IMR-90 (cell line): ENCODE measurements at regions of chr5 and their contacts with region 1.

Region 1: GRCh38 chr5:143824851-143825720 is 13.1 kb downstream of the HMHB1 start:
- DNase-seq: peak; percentile 75
- ATAC-seq: peak; percentile 88
- H3K4me3 ChIP-seq: no peak overlapping the region
- H3K27ac ChIP-seq: no peak overlapping the region
- H3K4me1 ChIP-seq: peaks cover 8% of the 10 kb centered on the region
- H3K27me3 ChIP-seq: no peaks in the 10 kb centered on the region
- CTCF ChIP-seq: peak; percentile 87
- POLR2A ChIP-seq: 0 out of 2 replicates have a peak, but pooled peaks have one; percentile 38
- RAD21 ChIP-seq: peak; percentile 99

Region 2: DNA sequence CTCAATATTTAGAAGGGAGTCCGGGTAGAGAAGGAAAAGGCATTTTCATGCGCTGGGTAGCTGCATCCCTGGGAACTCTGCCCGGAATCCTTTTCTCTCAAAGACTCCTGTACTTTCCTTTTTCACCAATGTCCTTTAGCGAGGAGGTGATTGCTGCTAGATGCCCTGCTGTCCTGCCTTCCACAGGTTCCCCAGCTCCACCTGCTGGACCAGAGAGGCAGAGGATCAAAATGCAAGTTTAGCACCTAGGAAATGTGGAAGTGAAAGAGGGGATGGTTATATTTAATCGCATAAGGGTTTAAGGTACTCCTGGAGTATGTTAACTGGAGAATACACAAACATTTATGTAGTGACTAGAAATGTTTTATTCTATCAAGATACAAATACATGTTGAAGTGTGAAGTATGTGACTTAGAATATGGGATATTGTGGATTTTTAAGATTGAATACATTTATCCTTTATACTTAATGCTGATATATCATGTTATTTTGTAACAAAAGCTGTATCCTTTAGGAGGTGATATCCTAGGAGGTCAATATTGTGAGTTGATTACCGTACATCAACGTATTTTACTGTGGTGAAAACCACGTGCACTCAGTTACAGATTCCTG is 909.2 kb before region 1 on chr5:
- CTCF ChIA-PET with region 1: no interaction called
- POLR2A ChIA-PET with region 1: no interaction called
- dilution Hi-C with region 1: no loop called
- in situ Hi-C with region 1: loop called (anchors 10 kb)
- intact Hi-C with region 1: loop called (anchors 5 kb)
- DNase-seq: peak; percentile 48
- ATAC-seq: no peak; the same call in 1 of the 2 replicates
- H3K4me3 ChIP-seq: no peak overlapping the region
- H3K27ac ChIP-seq: no peak overlapping the region
- H3K4me1 ChIP-seq: no peaks in the 10 kb centered on the region
- H3K27me3 ChIP-seq: no peaks in the 10 kb centered on the region
- CTCF ChIP-seq: peak; percentile 53
- POLR2A ChIP-seq: no peak
- RAD21 ChIP-seq: peak; percentile 57

Region 3: GRCh38 chr5:143106174-143106573 is 718.9 kb before region 1 on chr5:
- CTCF ChIA-PET with region 1: interaction called, 3 read pairs
- POLR2A ChIA-PET with region 1: no interaction called
- dilution Hi-C with region 1: no loop called
- in situ Hi-C with region 1: no loop called
- intact Hi-C with region 1: loop called (anchors 10 kb)
- DNase-seq: peak; percentile 77
- ATAC-seq: peak; percentile 78
- H3K4me3 ChIP-seq: no peak overlapping the region
- H3K27ac ChIP-seq: no peak overlapping the region
- H3K4me1 ChIP-seq: peaks cover 2% of the 10 kb centered on the region; the same call in 1 of the 2 replicates
- H3K27me3 ChIP-seq: no peaks in the 10 kb centered on the region
- CTCF ChIP-seq: peak; percentile 46
- POLR2A ChIP-seq: no peak
- RAD21 ChIP-seq: peak; percentile 68

Region 4: DNA sequence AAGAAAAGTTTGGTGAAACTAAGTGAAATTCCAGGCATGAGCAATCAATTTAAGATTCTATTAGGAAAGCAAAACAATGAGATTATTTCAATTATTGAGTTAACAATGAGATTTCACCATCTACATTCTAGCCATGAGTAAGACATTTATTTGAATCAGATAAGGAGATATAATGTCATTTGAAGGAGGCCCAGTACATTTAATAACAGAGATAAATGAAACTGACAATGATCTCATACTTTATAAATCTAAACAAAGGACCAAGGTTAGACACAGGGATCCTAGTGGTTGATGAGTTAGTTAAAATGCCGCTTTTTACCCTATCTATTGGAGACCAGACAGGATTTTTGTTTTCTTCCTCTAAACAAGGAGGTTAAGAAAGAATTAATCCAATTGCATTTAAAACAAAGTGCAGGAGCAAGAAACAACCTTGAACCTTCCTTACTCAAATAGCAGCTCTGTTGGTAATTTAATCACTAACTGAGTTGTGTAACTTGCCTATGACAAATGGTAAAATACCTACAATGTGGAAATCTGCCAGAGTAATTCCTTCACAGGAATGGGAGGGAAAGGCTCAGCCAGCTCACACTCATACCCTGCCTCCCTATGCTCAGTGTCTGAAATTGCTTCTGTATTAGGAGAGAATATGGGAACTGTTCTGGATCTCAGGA is 318.1 kb before region 1 on chr5:
- CTCF ChIA-PET with region 1: no interaction called
- POLR2A ChIA-PET with region 1: no interaction called
- dilution Hi-C with region 1: no loop called
- in situ Hi-C with region 1: no loop called
- intact Hi-C with region 1: loop called (anchors 5 kb)
- DNase-seq: peak; percentile 95
- ATAC-seq: peak; percentile 90
- H3K4me3 ChIP-seq: no peak overlapping the region
- H3K27ac ChIP-seq: peak overlapping the region; percentile 61
- H3K4me1 ChIP-seq: peaks cover 11% of the 10 kb centered on the region
- H3K27me3 ChIP-seq: no peaks in the 10 kb centered on the region
- CTCF ChIP-seq: peak; percentile 27; the same call in 1 of the 2 replicates
- POLR2A ChIP-seq: no peak
- RAD21 ChIP-seq: peak; percentile 43

Region 5: GRCh38 chr5:143557061-143557818 is 267.8 kb before region 1 on chr5:
- CTCF ChIA-PET with region 1: no interaction called
- POLR2A ChIA-PET with region 1: no interaction called
- dilution Hi-C with region 1: no loop called
- in situ Hi-C with region 1: loop called (anchors 10 kb)
- intact Hi-C with region 1: loop called (anchors 1 kb)
- DNase-seq: peak; percentile 94
- ATAC-seq: peak; percentile 68
- H3K4me3 ChIP-seq: no peak overlapping the region
- H3K27ac ChIP-seq: peak overlapping the region; percentile 26
- H3K4me1 ChIP-seq: peaks cover 10% of the 10 kb centered on the region
- H3K27me3 ChIP-seq: no peaks in the 10 kb centered on the region
- CTCF ChIP-seq: no peak
- POLR2A ChIP-seq: no peak
- RAD21 ChIP-seq: no peak

Region 6: GRCh38 chr5:143714629-143715028 is 110.5 kb before region 1 on chr5:
- CTCF ChIA-PET with region 1: no interaction called
- POLR2A ChIA-PET with region 1: no interaction called
- dilution Hi-C with region 1: no loop called
- in situ Hi-C with region 1: no loop called
- intact Hi-C with region 1: loop called (anchors 5 kb)
- DNase-seq: peak; percentile 60
- ATAC-seq: peak; percentile 21; the same call in 1 of the 2 replicates
- H3K4me3 ChIP-seq: no peak overlapping the region
- H3K27ac ChIP-seq: no peak overlapping the region
- H3K4me1 ChIP-seq: peaks cover 3% of the 10 kb centered on the region
- H3K27me3 ChIP-seq: no peaks in the 10 kb centered on the region
- CTCF ChIP-seq: no peak
- POLR2A ChIP-seq: no peak
- RAD21 ChIP-seq: no peak

Region 7: GRCh38 chr5:144142139-144142823 is 317.2 kb after region 1 on chr5:
- CTCF ChIA-PET with region 1: interaction called, 3 read pairs
- POLR2A ChIA-PET with region 1: no interaction called
- dilution Hi-C with region 1: no loop called
- in situ Hi-C with region 1: loop called (anchors 10 kb)
- intact Hi-C with region 1: loop called (anchors 1 kb)
- DNase-seq: peak; percentile 67
- ATAC-seq: peak; percentile 89
- H3K4me3 ChIP-seq: no peak overlapping the region
- H3K27ac ChIP-seq: no peak overlapping the region
- H3K4me1 ChIP-seq: peaks cover 7% of the 10 kb centered on the region
- H3K27me3 ChIP-seq: no peaks in the 10 kb centered on the region
- CTCF ChIP-seq: peak; percentile 76
- POLR2A ChIP-seq: no peak
- RAD21 ChIP-seq: peak; percentile 83